ENCODE measurements at regions of chr12 and their contacts with region 1.

Region 1: GRCh38 chr12:52156736-52157565 is 34.9 kb downstream of the KRT80 start:
- DNase-seq: peak; percentile 51 to 94 (median 71)
- ATAC-seq: peak; percentile 78
- H3K4me3 ChIP-seq: no peak overlapping the region
- H3K27ac ChIP-seq: no peak overlapping the region
- H3K4me1 ChIP-seq: peaks cover 7 to 10% of the 10 kb centered on the region in 2 donors
- H3K27me3 ChIP-seq: peaks cover 0 to 12% of the 10 kb centered on the region in 2 donors
- CTCF ChIP-seq: peak; percentile 90 to 95

Region 2: DNA sequence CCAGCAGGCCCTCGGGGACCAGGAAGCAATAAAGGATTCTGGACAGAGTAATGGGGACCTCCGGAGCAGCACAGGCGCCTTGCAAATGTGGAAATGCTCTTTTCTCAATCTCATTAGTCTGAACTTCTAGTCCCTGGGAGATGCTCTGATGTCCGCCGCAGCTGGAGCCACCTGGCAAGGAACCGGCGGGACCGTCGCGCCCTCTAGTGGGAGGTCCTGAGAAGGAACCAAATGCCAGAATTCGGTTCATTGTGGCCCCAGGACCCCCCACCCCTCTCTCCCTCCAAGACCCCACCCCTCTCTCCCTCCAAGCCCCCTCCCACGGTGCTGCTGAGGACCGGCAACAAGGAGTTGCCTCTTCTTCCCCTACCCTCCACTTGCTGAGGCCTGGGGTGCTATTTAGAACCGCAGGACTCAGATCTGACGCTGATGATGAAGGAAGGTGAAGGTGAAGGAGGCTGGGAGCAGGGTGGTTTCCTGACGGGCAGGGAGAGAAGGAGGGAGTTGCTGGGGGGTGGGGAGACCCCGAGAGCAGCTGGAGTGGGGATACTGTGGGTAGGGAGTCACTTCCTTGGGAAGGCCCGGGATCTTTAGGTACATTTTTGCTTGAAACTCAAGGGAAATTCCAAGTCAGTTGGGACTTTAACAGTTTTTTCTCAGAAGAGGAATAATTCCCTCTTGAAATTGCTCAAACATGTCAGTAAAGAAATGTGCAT is 35.0 kb before region 1 on chr12:
- intact Hi-C with region 1: no loop called
- DNase-seq: peak in 3 of 4 donors; percentile 73 to 90 (median 90)
- ATAC-seq: peak; percentile 65
- H3K4me3 ChIP-seq: no peak overlapping the region
- H3K27ac ChIP-seq: no peak overlapping the region
- H3K4me1 ChIP-seq: peaks cover 0 to 28% of the 10 kb centered on the region in 2 donors
- H3K27me3 ChIP-seq: peaks cover 0 to 41% of the 10 kb centered on the region in 2 donors
- CTCF ChIP-seq: peak; percentile 62 to 64

Region 3: GRCh38 chr12:52321418-52321817 is 164.5 kb after region 1 on chr12:
- intact Hi-C with region 1: loop called in 1 of 2 experiments (anchors 5 kb)
- DNase-seq: no peak
- ATAC-seq: no peak
- H3K4me3 ChIP-seq: no peak overlapping the region
- H3K27ac ChIP-seq: no peak overlapping the region
- H3K4me1 ChIP-seq: no peaks in the 10 kb centered on the region
- H3K27me3 ChIP-seq: peaks cover 5 to 68% of the 10 kb centered on the region in 2 donors
- CTCF ChIP-seq: no peak

Region 4: GRCh38 chr12:52346593-52346992 is 189.6 kb after region 1 on chr12:
- intact Hi-C with region 1: no loop called
- DNase-seq: peak in 1 of 4 donors; percentile 65
- ATAC-seq: peak; percentile 74
- H3K4me3 ChIP-seq: no peak overlapping the region
- H3K27ac ChIP-seq: no peak overlapping the region
- H3K4me1 ChIP-seq: peaks cover 0 to 6% of the 10 kb centered on the region in 2 donors
- H3K27me3 ChIP-seq: no peaks in the 10 kb centered on the region
- CTCF ChIP-seq: no peak

Region 5: DNA sequence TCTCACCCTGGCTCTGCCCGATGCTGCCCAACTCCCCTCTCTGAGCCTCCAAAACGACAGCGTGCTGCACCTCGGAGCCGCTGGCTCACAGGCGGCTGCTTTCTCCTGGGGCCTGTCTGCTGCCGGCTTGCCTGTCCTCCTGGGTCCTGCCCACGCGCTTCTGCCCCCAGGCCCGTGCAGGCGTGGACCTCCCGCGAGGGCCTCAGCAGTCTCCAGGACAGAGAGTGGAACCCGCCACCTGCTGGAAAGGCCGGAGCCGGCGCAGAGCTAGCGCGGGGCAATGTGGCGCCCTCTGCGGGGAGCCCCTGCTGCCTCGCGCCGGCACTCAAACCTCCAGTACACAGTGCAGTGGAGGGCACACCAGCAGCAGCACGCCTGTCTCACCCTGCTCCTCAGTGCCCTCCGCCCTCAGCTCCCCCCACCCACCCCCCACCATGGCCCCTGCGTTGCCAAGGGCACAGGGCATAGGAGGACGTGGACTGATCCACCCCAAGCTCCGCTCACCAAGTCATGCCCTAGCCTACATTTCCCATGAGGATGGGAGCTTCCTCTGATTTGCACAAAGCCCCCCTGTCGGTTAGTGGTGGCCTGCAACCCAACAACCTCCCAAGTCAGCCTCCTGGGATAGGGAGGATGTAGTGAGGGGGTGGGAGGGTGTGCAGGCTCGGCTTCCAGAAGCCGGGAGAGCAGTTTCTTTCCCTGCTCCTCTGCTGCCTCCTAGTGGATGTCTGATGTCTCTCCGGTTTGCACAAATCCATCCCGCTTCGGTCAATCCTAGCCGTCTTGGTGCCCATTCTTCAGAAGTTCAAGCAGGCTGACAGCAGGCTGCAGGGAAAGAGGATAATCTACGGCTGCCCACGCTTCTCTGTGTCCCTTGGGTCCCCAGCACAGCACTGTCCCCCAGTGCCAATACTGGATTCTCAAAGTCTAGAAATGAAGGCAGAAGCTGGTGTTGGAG is 722.7 kb after region 1 on chr12:
- intact Hi-C with region 1: loop called in 1 of 2 experiments (anchors 10 kb)
- DNase-seq: peak; percentile 75 to 92 (median 82)
- ATAC-seq: peak; percentile 94
- H3K4me3 ChIP-seq: peak overlapping the region in 1 of 2 donors; percentile 20
- H3K27ac ChIP-seq: no peak overlapping the region
- H3K4me1 ChIP-seq: peaks cover 6 to 23% of the 10 kb centered on the region in 2 donors
- H3K27me3 ChIP-seq: peaks cover 0 to 33% of the 10 kb centered on the region in 2 donors
- CTCF ChIP-seq: peak; percentile 46 to 76